Astrocyte of the cerebellum (primary cell): ENCODE measurements at regions of chr7 and their contacts with region 1.

Region 1: DNA sequence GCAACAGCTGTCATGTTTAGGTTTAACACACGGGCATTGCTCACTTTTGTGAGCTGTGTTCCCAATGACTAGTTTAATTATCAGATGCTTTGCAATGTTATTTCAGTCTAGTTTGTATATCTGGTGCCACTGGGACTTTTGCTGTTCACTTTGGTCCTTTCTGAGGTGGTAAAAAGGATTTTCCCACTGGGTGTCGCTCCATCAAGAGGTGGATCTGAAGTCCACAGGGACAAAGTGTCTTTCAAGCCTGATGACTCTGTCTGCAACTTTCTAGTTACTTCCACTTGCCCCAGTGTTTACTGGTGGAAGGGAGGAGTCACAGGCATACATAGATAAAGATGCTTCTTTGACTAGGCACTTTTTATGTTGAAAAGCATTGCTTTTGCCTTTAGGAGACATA is 242.2 kb downstream of the HGF start:
- DNase-seq: no peak
- H3K4me3 ChIP-seq: no peak overlapping the region
- CTCF ChIP-seq: no peak

Region 2: GRCh38 chr7:81469869-81470723 is 57.6 kb before region 1 on chr7:
- in situ Hi-C with region 1: no loop called
- DNase-seq: peak; percentile 76
- H3K4me3 ChIP-seq: no peak overlapping the region
- CTCF ChIP-seq: peak; percentile 74

Region 3: DNA sequence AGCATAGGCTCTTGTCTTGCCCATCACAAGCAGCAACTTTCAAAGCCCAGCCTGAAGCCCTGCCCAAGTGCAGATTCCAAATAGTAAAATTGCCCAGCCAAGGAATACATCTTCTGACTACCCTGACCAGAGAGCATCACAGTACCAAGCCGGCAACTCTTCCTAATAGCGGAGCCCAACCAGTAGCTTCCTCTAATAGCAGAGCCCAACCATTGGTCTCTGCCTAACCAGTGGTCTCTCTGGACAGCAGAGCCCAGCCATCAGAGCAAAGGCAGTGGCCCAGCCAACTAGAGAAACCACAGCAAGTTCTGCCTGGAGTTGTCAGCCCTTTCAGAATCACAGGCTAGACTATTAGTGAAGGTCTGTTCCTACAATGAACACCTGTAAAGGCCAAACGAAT is 43.4 kb before region 1 on chr7:
- in situ Hi-C with region 1: no loop called
- DNase-seq: peak; percentile 90
- H3K4me3 ChIP-seq: no peak overlapping the region
- CTCF ChIP-seq: no peak

Region 4: GRCh38 chr7:81583882-81584533 is 56.4 kb after region 1 on chr7:
- in situ Hi-C with region 1: loop called (anchors 5 kb)
- DNase-seq: no peak
- H3K4me3 ChIP-seq: no peak overlapping the region
- CTCF ChIP-seq: no peak

Region 5: GRCh38 chr7:81604075-81604807 is 76.6 kb after region 1 on chr7:
- in situ Hi-C with region 1: no loop called
- DNase-seq: no peak
- H3K4me3 ChIP-seq: no peak overlapping the region
- CTCF ChIP-seq: no peak

Region 6: GRCh38 chr7:82373926-82374640 is 846.4 kb after region 1 on chr7:
- in situ Hi-C with region 1: no loop called
- DNase-seq: no peak
- H3K4me3 ChIP-seq: no peak overlapping the region
- CTCF ChIP-seq: no peak